Esophagus muscularis mucosa (tissue), 4 donors: ENCODE measurements at regions of chr1 and their contacts with region 1.

Region 1: GRCh38 chr1:72282271-72283021 is at the start of gene NEGR1:
- DNase-seq: peak; percentile 94
- H3K4me3 ChIP-seq: peak within 1 kb of the TSS; percentile 71 to 80 (median 79)
- H3K27ac ChIP-seq: peak within 1 kb of the TSS; percentile 93 to 97 (median 94)
- H3K4me1 ChIP-seq: peaks cover 0 to 63% (median 42%) of the 10 kb centered on the region in 4 donors
- H3K27me3 ChIP-seq: no peaks in the 10 kb centered on the region
- CTCF ChIP-seq: peak; percentile 21 to 31 (median 28)
- EP300 ChIP-seq: no peak
- POLR2A ChIP-seq: no peak
- total RNA-seq, gene NEGR1: 34.5 to 58.8 (median 48.5) TPM

Region 2: DNA sequence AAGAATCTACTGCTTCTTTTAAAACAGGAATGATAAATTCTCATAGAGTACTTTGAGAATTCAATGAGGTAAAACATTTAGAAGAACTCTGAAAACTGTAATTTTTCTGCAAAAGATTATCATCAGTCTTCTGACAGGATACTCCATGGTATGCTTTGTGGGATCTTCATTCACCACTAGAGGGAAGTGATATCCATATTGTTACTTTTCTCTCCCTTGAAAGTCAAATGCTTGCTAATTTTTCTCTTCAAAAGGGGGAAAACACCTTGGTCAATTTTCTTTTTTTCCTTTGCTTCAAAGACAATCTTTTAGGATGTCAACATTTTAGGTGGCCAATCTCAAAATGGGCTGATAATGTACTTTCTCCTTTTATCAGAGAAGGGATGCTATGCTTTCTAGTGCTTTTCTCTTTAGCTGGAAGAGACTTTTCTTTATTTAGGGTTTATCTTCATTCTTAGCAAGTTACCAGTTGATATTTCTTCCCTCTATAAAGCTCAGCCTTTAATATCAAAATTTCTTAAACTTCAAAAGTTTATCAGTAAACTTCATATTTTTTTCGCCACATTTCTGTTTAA is 95.6 kb before region 1 on chr1:
- intact Hi-C with region 1: loop called (anchors 2 kb)
- DNase-seq: no peak
- H3K4me3 ChIP-seq: no peak overlapping the region
- H3K27ac ChIP-seq: no peak overlapping the region
- H3K4me1 ChIP-seq: peaks cover 0 to 40% (median 26%) of the 10 kb centered on the region in 4 donors
- H3K27me3 ChIP-seq: no peaks in the 10 kb centered on the region
- CTCF ChIP-seq: peak; percentile 49 to 75 (median 65)
- EP300 ChIP-seq: no peak
- POLR2A ChIP-seq: no peak

Region 3: DNA sequence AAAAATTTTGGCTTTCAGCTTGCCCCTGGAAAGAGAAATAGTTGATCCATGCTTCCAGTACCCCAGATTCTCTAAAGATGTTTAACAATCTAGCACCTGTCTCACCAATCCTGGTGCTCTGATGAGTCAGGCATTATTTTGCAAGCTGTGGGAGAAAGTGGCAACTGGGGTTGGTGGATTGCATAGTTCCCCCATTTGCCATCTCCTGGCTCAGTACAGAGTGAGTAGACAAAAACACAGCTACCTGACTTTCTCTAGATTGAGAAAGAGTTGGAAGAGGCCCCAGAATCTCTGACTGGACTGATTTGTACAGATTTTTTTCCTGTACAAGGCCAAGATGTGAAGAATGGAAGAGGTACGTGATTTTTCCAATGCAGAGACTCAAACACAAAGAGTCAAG is 75.0 kb after region 1 on chr1:
- intact Hi-C with region 1: no loop called
- DNase-seq: no peak
- H3K4me3 ChIP-seq: no peak overlapping the region
- H3K27ac ChIP-seq: no peak overlapping the region
- H3K4me1 ChIP-seq: no peaks in the 10 kb centered on the region
- H3K27me3 ChIP-seq: no peaks in the 10 kb centered on the region
- CTCF ChIP-seq: no peak
- EP300 ChIP-seq: no peak
- POLR2A ChIP-seq: no peak